Endothelial cell of umbilical vein (primary cell): ENCODE measurements at regions of chr6 and their contacts with region 1.

Region 1: GRCh38 chr6:4135665-4136353 is 434 bp upstream of the ECI2 start:
- DNase-seq: peak; percentile 92
- H3K4me3 ChIP-seq: peak overlapping the region; percentile 48 to 75 (median 72)
- H3K27ac ChIP-seq: peak overlapping the region; percentile 24
- H3K4me1 ChIP-seq: peaks cover 22% of the 10 kb centered on the region
- H3K27me3 ChIP-seq: no peaks in the 10 kb centered on the region
- CTCF ChIP-seq: no peak
- POLR2A ChIP-seq: peak; percentile 58

Region 2: DNA sequence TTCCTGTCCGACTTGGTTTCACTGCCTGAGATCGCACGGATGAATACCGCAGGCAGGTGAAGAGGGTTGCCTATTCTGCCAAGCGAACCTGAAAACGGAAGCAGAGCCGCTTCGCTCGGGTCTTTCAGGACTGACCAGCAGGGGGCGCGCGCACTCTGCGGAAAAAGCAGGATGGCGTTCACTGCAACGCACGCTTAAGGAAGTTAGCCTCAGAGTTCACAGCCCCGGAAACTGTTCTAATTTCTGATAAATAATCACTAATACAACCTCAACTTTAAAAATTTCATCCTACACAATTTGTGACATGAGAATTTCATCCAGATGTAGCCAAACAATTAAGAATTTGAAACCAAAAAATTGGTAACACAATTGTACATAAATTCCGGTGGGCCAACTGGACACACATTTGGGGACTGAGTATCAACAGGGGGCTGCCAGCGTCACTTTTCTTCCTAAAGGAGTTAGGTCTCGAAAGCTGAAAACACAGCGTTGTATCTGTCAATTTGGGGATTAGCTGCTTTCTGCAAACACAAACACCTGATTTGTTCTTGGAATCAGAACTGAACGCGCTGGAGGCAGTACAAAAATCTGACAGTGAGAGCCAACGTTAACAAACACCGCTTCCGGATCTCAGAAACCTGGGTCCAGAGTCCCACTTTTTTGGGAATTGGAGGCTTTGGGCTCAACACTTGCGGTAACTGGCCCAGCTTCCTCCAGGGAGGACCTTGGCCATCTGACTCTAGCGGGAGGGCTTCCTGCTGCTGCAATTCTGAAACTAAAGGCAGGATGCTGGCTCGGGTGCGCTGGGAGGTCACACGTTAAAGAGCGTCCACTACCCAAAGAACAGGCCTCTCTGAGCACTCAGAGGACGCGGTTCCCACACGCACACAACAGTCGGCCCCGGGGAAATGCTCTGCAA is 393.1 kb before region 1 on chr6:
- CTCF ChIA-PET with region 1: no interaction called
- POLR2A ChIA-PET with region 1: no interaction called
- dilution Hi-C with region 1: no loop called
- intact Hi-C with region 1: loop called (anchors 10 kb)
- DNase-seq: peak; percentile 88
- H3K4me3 ChIP-seq: peak overlapping the region in 1 of 3 experiments; percentile 25
- H3K27ac ChIP-seq: peak overlapping the region; percentile 74
- H3K4me1 ChIP-seq: peaks cover 77% of the 10 kb centered on the region
- H3K27me3 ChIP-seq: no peaks in the 10 kb centered on the region
- CTCF ChIP-seq: peak; percentile 88 to 93
- POLR2A ChIP-seq: no peak

Region 3: GRCh38 chr6:4018172-4018905 is 117.5 kb before region 1 on chr6:
- CTCF ChIA-PET with region 1: interaction called, 8 read pairs
- POLR2A ChIA-PET with region 1: interaction called, 12 read pairs
- dilution Hi-C with region 1: no loop called
- intact Hi-C with region 1: loop called (anchors 1 kb)
- DNase-seq: peak; percentile 94
- H3K4me3 ChIP-seq: peak overlapping the region; percentile 50 to 92 (median 85)
- H3K27ac ChIP-seq: peak overlapping the region; percentile 93
- H3K4me1 ChIP-seq: peaks cover 29% of the 10 kb centered on the region
- H3K27me3 ChIP-seq: no peaks in the 10 kb centered on the region
- CTCF ChIP-seq: peak; percentile 25 to 52
- POLR2A ChIP-seq: peak; percentile 84

Region 4: DNA sequence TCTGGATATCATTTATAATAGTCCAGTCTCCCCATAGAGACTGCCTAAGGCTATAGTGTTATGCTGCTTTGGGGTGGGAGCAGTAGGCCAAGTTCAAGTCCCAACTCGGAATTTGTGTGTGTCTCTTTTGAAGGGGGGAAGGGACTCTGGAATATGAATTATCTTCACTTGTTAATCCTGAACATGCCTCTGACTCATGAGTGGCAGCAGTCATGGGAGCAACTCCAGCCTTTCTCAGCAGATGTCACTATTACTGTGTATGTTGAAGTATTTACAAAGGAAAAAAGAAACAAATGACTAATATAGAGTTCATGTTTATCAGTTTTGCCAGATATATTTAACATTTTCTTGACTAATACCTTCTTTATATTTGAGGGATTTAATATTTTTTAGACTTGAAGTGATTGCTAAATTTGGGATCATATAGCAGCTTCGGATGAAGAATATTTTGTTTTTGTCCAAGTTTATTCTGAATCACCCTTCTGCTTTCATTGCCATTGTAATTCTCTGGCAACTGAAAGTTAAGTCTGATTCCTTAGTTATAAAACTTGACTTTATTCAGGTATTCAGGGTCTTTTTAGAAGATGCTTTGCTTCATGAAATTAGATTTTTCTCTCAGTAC is 80.3 kb before region 1 on chr6:
- CTCF ChIA-PET with region 1: interaction called, 13 read pairs
- POLR2A ChIA-PET with region 1: interaction called, 6 read pairs
- dilution Hi-C with region 1: no loop called
- intact Hi-C with region 1: loop called (anchors 2 kb)
- DNase-seq: peak; percentile 92
- H3K4me3 ChIP-seq: no peak overlapping the region
- H3K27ac ChIP-seq: peak overlapping the region; percentile 41
- H3K4me1 ChIP-seq: peaks cover 22% of the 10 kb centered on the region
- H3K27me3 ChIP-seq: no peaks in the 10 kb centered on the region
- CTCF ChIP-seq: peak; percentile 44 to 59
- POLR2A ChIP-seq: no peak

Region 5: GRCh38 chr6:4185419-4185818 is 49.6 kb after region 1 on chr6:
- CTCF ChIA-PET with region 1: no interaction called
- POLR2A ChIA-PET with region 1: no interaction called
- dilution Hi-C with region 1: no loop called
- intact Hi-C with region 1: no loop called
- DNase-seq: no peak
- H3K4me3 ChIP-seq: no peak overlapping the region
- H3K27ac ChIP-seq: no peak overlapping the region
- H3K4me1 ChIP-seq: no peaks in the 10 kb centered on the region
- H3K27me3 ChIP-seq: peaks cover 4% of the 10 kb centered on the region in 2 experiments
- CTCF ChIP-seq: no peak
- POLR2A ChIP-seq: no peak